WTC11 (cell line): ENCODE measurements at regions of chr5 and their contacts with region 1.

Region 1: GRCh38 chr5:149852641-149853330 is 91.8 kb downstream of the PDE6A start:
- DNase-seq: peak; percentile 82
- ATAC-seq: peak; percentile 94
- H3K4me3 Mint-ChIP-seq: no peak overlapping the region
- H3K27ac Mint-ChIP-seq: 0 out of 2 replicates have a peak overlapping the region, but pooled peaks have one; percentile 57
- H3K4me1 Mint-ChIP-seq: peaks cover 4% of the 10 kb centered on the region; the same call in 1 of the 2 replicates
- H3K27me3 Mint-ChIP-seq: no peaks in the 10 kb centered on the region
- CTCF ChIP-seq: peak; percentile 77; the same call in 1 of the 2 replicates

Region 2: DNA sequence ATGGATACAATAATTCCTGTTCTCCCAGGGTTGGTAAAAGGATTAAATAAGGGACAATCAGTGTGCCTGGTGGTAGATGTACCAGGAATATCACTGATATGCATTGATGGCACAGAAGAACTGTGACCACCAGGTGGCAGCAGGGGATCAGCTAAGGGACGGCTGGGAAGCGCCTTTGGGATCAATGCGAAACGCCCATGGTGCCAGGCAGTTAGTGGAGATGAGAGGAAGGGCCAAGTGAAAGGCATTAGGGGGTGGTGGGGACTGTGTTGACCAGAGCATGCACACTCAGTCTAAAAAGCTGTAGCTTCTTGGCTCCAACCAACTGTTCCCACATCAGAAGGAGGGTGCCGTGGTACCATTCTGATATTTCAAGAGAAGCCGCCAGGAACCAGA is 215.9 kb before region 1 on chr5:
- CTCF ChIA-PET with region 1: interaction called, 18 read pairs
- POLR2A ChIA-PET with region 1: no interaction called
- DNase-seq: peak; percentile 50
- ATAC-seq: peak; percentile 78
- H3K4me3 Mint-ChIP-seq: no peak overlapping the region
- H3K27ac Mint-ChIP-seq: no peak overlapping the region
- H3K4me1 Mint-ChIP-seq: peaks cover 24% of the 10 kb centered on the region
- H3K27me3 Mint-ChIP-seq: no peaks in the 10 kb centered on the region
- CTCF ChIP-seq: peak; percentile 59; the same call in 1 of the 2 replicates

Region 3: GRCh38 chr5:149799119-149799623 is 53.6 kb before region 1 on chr5:
- CTCF ChIA-PET with region 1: interaction called, 14 read pairs
- POLR2A ChIA-PET with region 1: no interaction called
- DNase-seq: no peak
- ATAC-seq: no peak
- H3K4me3 Mint-ChIP-seq: no peak overlapping the region
- H3K27ac Mint-ChIP-seq: no peak overlapping the region
- H3K4me1 Mint-ChIP-seq: peaks cover 51% of the 10 kb centered on the region
- H3K27me3 Mint-ChIP-seq: no peaks in the 10 kb centered on the region
- CTCF ChIP-seq: no peak

Region 4: DNA sequence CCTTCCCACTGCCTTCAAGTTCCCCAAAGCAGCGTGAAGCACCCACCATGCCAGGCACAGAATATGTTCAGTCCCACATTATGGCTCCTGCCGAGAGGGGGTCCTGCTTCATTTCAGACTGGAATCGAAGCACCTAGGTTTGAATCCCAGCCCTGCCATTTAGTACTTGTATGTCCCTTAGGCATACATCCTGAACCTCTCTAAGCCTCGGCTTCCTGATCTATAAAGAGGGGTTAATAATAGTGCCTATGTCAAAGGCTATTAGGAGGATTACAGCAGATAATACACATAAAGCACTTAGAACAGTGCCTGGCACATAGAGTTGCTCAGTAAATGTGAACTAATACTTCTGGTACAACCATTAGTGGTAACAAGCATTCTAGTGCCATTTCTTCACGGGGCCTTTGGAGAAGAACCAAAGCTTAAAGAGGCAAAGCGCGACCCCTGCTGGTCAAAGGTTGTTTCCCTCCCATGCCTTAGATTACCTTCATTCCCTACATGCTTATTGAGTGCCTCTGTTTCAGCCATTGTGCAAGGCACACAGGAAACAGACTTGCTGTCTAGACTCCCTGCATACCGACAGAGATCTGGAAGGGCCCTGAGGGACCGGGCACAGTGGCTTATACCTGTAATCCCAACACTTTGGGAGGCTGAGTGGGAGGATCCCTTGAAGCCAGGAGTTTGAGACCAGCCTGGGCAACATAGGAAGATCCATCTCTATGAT is 24.5 kb before region 1 on chr5:
- CTCF ChIA-PET with region 1: interaction called, 298 read pairs
- POLR2A ChIA-PET with region 1: no interaction called
- DNase-seq: peak; percentile 90
- ATAC-seq: peak; percentile 94
- H3K4me3 Mint-ChIP-seq: no peak overlapping the region
- H3K27ac Mint-ChIP-seq: peak overlapping the region; percentile 67
- H3K4me1 Mint-ChIP-seq: peaks cover 5% of the 10 kb centered on the region
- H3K27me3 Mint-ChIP-seq: no peaks in the 10 kb centered on the region
- CTCF ChIP-seq: peak; percentile 68

Region 5: GRCh38 chr5:149932445-149933350 is 79.9 kb after region 1 on chr5:
- CTCF ChIA-PET with region 1: interaction called, 11 read pairs
- POLR2A ChIA-PET with region 1: no interaction called
- DNase-seq: peak; percentile 49
- ATAC-seq: peak; percentile 97
- H3K4me3 Mint-ChIP-seq: no peak overlapping the region
- H3K27ac Mint-ChIP-seq: no peak overlapping the region
- H3K4me1 Mint-ChIP-seq: no peaks in the 10 kb centered on the region
- H3K27me3 Mint-ChIP-seq: no peaks in the 10 kb centered on the region
- CTCF ChIP-seq: no peak

Region 6: DNA sequence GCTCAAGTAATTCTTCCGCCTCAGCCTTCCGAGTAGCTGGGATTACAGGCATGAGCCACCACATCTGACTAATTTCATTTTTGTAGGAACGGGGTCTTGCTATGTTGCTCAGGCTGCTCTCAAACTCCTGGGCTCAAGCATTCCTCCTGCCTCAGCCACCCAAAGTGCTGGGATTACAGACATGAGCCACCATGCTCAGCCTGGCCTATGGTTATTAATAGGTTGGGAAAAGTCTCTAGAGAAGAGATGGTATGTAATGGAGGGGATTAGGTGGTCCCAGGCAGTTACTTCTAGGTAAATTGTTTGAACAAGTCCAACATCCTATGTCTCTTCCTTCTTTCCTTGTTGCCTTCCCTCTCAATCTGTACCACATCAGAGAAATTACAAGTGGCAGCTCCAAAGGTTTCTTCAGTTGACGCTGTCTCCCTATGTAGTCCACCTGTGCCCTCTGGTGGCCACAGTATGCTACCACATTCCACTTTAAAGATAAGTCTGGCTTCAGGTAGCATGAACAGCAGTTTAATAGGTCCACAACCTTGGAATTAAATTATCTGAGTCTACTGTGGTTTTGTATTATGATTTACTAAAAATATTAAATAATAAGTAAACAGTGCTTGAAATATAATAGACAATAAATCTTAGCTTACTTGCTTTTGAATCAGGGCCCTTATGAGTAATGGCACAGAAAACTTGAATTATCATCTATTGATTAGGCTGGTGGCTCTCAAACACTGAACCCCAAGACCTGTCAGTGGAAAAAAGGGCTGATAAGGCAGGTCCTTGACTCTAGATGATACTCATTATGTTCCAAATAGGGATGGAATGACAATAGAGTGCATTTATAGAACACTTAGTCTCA is 138.0 kb after region 1 on chr5:
- CTCF ChIA-PET with region 1: interaction called, 16 read pairs
- POLR2A ChIA-PET with region 1: no interaction called
- DNase-seq: peak; percentile 74
- ATAC-seq: peak; percentile 94
- H3K4me3 Mint-ChIP-seq: no peak overlapping the region
- H3K27ac Mint-ChIP-seq: no peak overlapping the region
- H3K4me1 Mint-ChIP-seq: no peaks in the 10 kb centered on the region
- H3K27me3 Mint-ChIP-seq: no peaks in the 10 kb centered on the region
- CTCF ChIP-seq: peak; percentile 88